ENCODE measurements at regions of chr5 and their contacts with region 1.

Region 1: GRCh38 chr5:107469485-107470294 is 201.0 kb downstream of the EFNA5 start:
- DNase-seq: peak; percentile 94
- H3K4me3 Mint-ChIP-seq: peak overlapping the region; percentile 47
- H3K27ac Mint-ChIP-seq: peak overlapping the region; percentile 93
- H3K4me1 Mint-ChIP-seq: peaks cover 77% of the 10 kb centered on the region
- H3K27me3 Mint-ChIP-seq: no peaks in the 10 kb centered on the region
- CTCF ChIP-seq: no peak

Region 2: GRCh38 chr5:107381189-107381856 is 88.4 kb before region 1 on chr5:
- CTCF ChIA-PET with region 1: interaction called, 3 read pairs
- POLR2A ChIA-PET with region 1: interaction called, 31 read pairs
- intact Hi-C with region 1: loop called (anchors 5 kb)
- DNase-seq: peak; percentile 87
- H3K4me3 Mint-ChIP-seq: peak overlapping the region; percentile 29
- H3K27ac Mint-ChIP-seq: peak overlapping the region; percentile 78
- H3K4me1 Mint-ChIP-seq: peaks cover 41% of the 10 kb centered on the region
- H3K27me3 Mint-ChIP-seq: no peaks in the 10 kb centered on the region
- CTCF ChIP-seq: no peak

Region 3: GRCh38 chr5:107389130-107389774 is 80.4 kb before region 1 on chr5:
- CTCF ChIA-PET with region 1: interaction called, 4 read pairs
- POLR2A ChIA-PET with region 1: interaction called, 31 read pairs
- intact Hi-C with region 1: loop called (anchors 5 kb)
- DNase-seq: peak; percentile 67
- H3K4me3 Mint-ChIP-seq: no peak overlapping the region
- H3K27ac Mint-ChIP-seq: peak overlapping the region; percentile 75
- H3K4me1 Mint-ChIP-seq: peaks cover 45% of the 10 kb centered on the region
- H3K27me3 Mint-ChIP-seq: no peaks in the 10 kb centered on the region
- CTCF ChIP-seq: no peak

Region 4: GRCh38 chr5:107425541-107426256 is 44.0 kb before region 1 on chr5:
- CTCF ChIA-PET with region 1: interaction called, 3 read pairs
- POLR2A ChIA-PET with region 1: interaction called, 35 read pairs
- intact Hi-C with region 1: loop called (anchors 5 kb)
- DNase-seq: peak; percentile 82
- H3K4me3 Mint-ChIP-seq: peak overlapping the region; percentile 40
- H3K27ac Mint-ChIP-seq: peak overlapping the region; percentile 88
- H3K4me1 Mint-ChIP-seq: peaks cover 39% of the 10 kb centered on the region
- H3K27me3 Mint-ChIP-seq: no peaks in the 10 kb centered on the region
- CTCF ChIP-seq: no peak

Region 5: DNA sequence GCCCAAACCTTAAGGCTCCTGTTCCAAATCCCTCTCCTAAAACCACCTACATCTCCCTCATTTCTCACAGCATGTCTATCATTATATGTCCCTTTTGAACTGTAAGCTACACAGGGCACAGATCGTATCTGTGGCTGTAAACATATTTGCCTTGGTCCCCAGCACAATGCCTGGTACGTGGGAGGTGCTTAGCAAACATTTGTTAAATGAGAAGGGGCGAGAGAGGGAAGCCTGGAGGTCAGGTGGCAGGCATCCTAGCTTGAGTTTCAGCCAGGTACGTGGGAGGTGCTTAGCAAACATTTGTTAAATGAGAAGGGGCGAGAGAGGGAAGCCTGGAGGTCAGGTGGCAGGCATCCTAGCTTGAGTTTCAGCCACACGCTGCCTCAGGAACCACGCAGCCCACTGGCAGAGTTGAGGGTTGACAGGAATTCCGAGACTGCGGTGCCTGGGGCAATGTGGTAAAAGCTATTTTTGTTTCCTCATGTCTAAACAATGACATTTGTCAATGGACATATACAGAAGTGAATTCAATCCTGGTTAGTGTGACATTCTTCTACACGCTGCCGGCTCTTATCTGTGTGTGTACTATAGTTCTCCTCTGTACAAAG is 87.5 kb after region 1 on chr5:
- CTCF ChIA-PET with region 1: interaction called, 3 read pairs
- POLR2A ChIA-PET with region 1: interaction called, 5 read pairs
- intact Hi-C with region 1: loop called (anchors 5 kb)
- DNase-seq: peak; percentile 92
- H3K4me3 Mint-ChIP-seq: peak overlapping the region; percentile 20
- H3K27ac Mint-ChIP-seq: peak overlapping the region; percentile 77
- H3K4me1 Mint-ChIP-seq: peaks cover 50% of the 10 kb centered on the region
- H3K27me3 Mint-ChIP-seq: no peaks in the 10 kb centered on the region
- CTCF ChIP-seq: no peak

Region 6: DNA sequence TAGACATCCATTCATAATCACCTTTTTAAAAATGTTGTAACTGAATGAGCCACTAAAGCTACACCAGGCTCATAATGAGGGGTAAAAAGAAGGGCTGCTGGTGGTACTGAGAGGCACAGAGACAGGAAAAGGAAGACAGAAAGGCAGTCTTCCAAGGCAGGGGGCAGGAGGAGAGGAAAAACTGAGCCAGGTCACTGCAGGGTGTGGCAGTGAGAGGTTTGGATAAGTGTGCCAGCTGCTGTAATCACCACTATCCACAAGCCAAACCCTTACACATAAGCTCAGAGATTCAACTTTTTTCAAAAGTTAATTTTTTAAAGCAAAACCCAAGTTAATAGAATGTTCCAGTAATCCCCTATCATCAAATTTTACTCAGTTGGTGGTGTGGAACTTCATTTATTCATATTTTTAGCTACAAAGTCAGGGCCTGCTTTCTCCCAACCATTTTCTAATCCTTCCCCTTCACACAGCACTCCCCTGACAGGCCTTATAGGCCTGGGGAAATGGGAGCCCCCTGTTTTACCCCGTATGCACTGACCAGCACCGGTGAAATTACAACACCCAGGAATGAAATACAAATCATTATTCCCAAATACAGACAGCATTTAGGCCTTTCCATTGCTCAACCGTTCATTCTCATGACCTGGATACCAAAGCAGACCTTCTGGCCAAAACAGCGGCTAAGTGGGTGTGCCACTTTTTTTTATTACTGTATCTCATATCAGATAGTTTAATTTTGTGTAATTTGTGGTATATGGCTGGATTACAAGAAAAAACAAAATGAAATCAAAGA is 124.8 kb after region 1 on chr5:
- CTCF ChIA-PET with region 1: no interaction called
- POLR2A ChIA-PET with region 1: no interaction called
- intact Hi-C with region 1: no loop called
- DNase-seq: peak; percentile 63
- H3K4me3 Mint-ChIP-seq: peak overlapping the region; percentile 57
- H3K27ac Mint-ChIP-seq: peak overlapping the region; percentile 84
- H3K4me1 Mint-ChIP-seq: peaks cover 25% of the 10 kb centered on the region
- H3K27me3 Mint-ChIP-seq: no peaks in the 10 kb centered on the region
- CTCF ChIP-seq: no peak